ENCODE measurements at regions of chr1 and their contacts with region 1.

Region 1: DNA sequence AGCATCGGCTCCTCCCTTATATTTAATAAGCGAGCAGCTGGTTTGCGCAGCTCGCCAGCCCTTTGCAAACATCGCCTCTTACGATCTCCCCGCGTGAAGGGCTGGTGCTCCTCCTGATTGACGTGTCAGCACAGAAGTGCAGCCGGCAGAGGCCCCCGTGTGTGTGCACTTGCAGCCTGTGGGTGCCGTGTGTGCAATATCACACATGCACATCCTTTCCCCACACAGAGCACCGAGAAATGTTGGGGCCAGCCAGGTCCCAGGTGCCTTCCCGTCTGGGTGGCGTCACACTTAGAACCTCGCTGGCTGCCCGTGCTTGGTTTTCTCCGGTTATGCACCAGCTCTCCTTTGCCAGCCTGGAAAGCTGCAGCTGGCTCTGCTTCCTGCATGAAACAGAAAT is 126.6 kb upstream of the AJAP1 start:
- DNase-seq: no peak
- H3K4me3 ChIP-seq: no peak overlapping the region
- H3K27ac ChIP-seq: no peak overlapping the region
- H3K4me1 ChIP-seq: no peaks in the 10 kb centered on the region
- H3K27me3 ChIP-seq: no peaks in the 10 kb centered on the region
- CTCF ChIP-seq: no peak

Region 2: GRCh38 chr1:4476394-4476793 is 51.4 kb before region 1 on chr1:
- CTCF ChIA-PET with region 1: no interaction called
- dilution Hi-C with region 1: loop called (anchors 5 kb)
- in situ Hi-C with region 1: no loop called
- intact Hi-C with region 1: no loop called
- DNase-seq: no peak
- H3K4me3 ChIP-seq: no peak overlapping the region
- H3K27ac ChIP-seq: no peak overlapping the region
- H3K4me1 ChIP-seq: no peaks in the 10 kb centered on the region
- H3K27me3 ChIP-seq: no peaks in the 10 kb centered on the region
- CTCF ChIP-seq: no peak

Region 3: DNA sequence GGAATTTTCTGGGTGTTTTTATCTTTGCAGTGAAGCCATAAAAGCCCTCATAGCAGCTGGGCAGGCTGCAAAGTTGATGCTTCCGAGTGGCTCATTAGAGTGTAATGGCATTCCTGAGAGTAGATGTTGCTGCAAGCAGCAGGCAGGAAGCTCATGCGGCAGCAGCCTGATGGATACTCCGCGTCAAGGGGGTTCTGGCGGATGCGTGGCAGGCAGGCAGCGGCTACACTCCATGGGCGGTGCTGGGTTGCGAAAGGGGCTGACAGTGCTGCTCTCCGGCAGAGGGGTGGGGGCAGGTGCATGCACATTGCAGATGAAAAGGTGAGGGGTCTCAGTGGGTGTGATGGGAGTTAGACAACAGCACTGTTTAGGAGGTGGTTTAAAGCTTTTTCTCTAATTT is 33.4 kb after region 1 on chr1:
- CTCF ChIA-PET with region 1: no interaction called
- dilution Hi-C with region 1: loop called (anchors 5 kb)
- in situ Hi-C with region 1: no loop called
- intact Hi-C with region 1: no loop called
- DNase-seq: no peak
- H3K4me3 ChIP-seq: no peak overlapping the region
- H3K27ac ChIP-seq: no peak overlapping the region
- H3K4me1 ChIP-seq: no peaks in the 10 kb centered on the region
- H3K27me3 ChIP-seq: no peaks in the 10 kb centered on the region
- CTCF ChIP-seq: no peak

Region 4: DNA sequence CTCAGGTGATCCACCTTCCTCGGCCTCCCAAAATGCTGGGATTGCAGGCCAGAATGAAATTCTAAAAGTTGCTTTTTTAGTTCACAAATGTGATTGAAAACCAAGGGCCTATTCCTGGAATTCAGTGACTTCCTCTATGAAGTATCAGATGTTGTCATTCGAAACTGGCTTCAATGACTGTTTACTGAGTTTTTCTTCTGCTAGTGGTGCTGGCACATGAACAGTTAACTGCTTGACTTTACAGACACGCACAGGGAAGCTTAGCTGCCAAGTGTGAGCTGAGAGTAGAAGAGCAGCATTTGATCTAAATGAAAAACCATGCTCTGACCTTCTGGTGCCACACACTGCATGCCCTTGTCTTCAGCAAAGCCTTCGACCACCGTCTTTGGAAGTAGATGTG is 93.8 kb after region 1 on chr1:
- CTCF ChIA-PET with region 1: no interaction called
- dilution Hi-C with region 1: loop called (anchors 5 kb)
- in situ Hi-C with region 1: no loop called
- intact Hi-C with region 1: no loop called
- DNase-seq: no peak
- H3K4me3 ChIP-seq: no peak overlapping the region
- H3K27ac ChIP-seq: no peak overlapping the region
- H3K4me1 ChIP-seq: no peaks in the 10 kb centered on the region
- H3K27me3 ChIP-seq: no peaks in the 10 kb centered on the region
- CTCF ChIP-seq: no peak

Measured in mammary epithelial cell (primary cell).